Prostate gland (tissue), 2 donors: ENCODE measurements at regions of chr17 and their contacts with region 1.

Region 1: DNA sequence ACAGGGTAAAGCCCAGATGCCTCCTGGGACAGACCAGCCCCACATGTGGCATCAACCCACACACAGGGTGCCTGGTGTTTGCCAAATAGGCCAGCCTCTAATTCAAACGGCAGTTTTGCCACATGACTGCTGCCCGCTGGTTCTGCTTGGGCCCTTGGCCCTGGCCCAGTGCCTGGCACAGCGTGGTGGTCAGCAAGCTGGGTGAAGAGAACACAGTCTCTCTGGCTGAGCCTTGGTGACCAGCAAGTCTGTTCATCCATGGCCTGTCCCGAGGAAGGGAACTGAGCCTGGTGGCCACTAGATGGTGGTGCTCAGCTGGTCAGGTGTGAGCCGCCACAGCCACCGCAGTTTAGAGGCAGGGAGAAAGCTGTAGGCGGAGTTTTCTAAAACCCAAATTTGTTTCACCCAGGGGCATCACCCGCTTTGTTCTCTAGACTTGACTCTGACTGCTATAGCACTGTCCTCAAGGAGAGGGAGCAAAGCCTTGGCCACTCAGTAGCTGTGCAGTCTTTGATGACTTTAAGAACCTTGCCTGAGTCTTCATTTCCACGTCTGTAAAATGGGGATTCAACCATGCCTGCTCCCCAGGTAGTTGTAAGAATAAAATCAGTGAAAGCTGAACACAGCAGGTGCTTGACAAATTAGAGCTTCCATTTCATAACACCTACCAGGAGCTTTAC is 4.7 kb upstream of the GFAP start:
- DNase-seq: peak; percentile 79
- H3K4me3 ChIP-seq: no peak overlapping the region
- H3K27ac ChIP-seq: no peak overlapping the region
- H3K4me1 ChIP-seq: no peaks in the 10 kb centered on the region
- H3K27me3 ChIP-seq: no peaks in the 10 kb centered on the region
- CTCF ChIP-seq: peak; percentile 69 to 93 (median 86)
- POLR2A ChIP-seq: no peak

Region 2: GRCh38 chr17:44887971-44888954 is 31.8 kb before region 1 on chr17:
- intact Hi-C with region 1: no loop called
- DNase-seq: no peak
- H3K4me3 ChIP-seq: no peak overlapping the region
- H3K27ac ChIP-seq: no peak overlapping the region
- H3K4me1 ChIP-seq: no peaks in the 10 kb centered on the region
- H3K27me3 ChIP-seq: no peaks in the 10 kb centered on the region
- CTCF ChIP-seq: no peak
- POLR2A ChIP-seq: no peak

Region 3: DNA sequence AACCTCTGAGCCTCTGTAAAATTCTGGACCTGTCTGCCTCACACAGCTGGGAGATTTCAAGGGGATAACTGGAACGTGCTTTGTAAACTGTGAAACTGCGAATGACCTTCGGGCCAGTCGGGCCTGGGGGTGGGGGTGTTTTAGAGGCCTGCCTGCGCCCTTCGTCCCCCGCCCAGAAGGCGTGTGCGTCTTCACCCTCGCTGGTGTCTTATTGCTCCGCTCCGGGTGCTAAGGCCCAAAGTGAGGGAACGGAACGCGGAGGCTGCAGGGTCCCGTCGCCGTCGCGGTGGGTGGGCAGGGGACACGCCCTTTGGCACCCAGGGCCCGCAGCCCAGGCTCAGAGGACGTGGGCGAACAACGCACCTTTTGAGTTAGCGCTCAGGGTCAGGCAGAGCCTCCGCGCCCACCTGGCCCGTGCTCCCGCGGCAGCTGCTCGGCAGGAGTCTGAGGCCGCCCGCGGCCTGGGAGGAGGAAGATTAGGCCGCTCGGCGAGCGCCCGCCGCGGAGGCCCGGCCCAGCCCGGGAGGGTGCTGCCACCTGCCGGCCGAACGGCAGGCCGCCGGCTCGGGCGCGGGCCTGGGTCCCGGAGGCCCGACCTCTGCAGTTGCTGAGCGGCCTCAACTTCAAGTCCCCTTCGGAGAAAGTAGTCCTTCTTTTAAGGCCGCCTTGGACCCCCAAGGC is 101.7 kb after region 1 on chr17:
- intact Hi-C with region 1: loop called (anchors 1 kb)
- DNase-seq: peak; percentile 42
- H3K4me3 ChIP-seq: peak overlapping the region; percentile 15 to 25
- H3K27ac ChIP-seq: peak overlapping the region; percentile 58 to 79
- H3K4me1 ChIP-seq: peaks cover 13% of the 10 kb centered on the region
- H3K27me3 ChIP-seq: no peaks in the 10 kb centered on the region
- CTCF ChIP-seq: peak; percentile 85 to 97 (median 91)
- POLR2A ChIP-seq: no peak

Region 4: GRCh38 chr17:45098869-45099616 is 179.0 kb after region 1 on chr17:
- intact Hi-C with region 1: loop called (anchors 2 kb)
- DNase-seq: peak; percentile 88
- H3K4me3 ChIP-seq: no peak overlapping the region
- H3K27ac ChIP-seq: no peak overlapping the region
- H3K4me1 ChIP-seq: peaks cover 4% of the 10 kb centered on the region
- H3K27me3 ChIP-seq: no peaks in the 10 kb centered on the region
- CTCF ChIP-seq: peak; percentile 71 to 96 (median 91)
- POLR2A ChIP-seq: no peak

Region 5: GRCh38 chr17:45115871-45116724 is 196.1 kb after region 1 on chr17:
- intact Hi-C with region 1: loop called (anchors 5 kb)
- DNase-seq: no peak
- H3K4me3 ChIP-seq: no peak overlapping the region
- H3K27ac ChIP-seq: no peak overlapping the region
- H3K4me1 ChIP-seq: no peaks in the 10 kb centered on the region
- H3K27me3 ChIP-seq: no peaks in the 10 kb centered on the region
- CTCF ChIP-seq: no peak
- POLR2A ChIP-seq: no peak